Left cardiac atrium (tissue), 4 donors: ENCODE measurements at regions of chr11 and their contacts with region 1.

Region 1: DNA sequence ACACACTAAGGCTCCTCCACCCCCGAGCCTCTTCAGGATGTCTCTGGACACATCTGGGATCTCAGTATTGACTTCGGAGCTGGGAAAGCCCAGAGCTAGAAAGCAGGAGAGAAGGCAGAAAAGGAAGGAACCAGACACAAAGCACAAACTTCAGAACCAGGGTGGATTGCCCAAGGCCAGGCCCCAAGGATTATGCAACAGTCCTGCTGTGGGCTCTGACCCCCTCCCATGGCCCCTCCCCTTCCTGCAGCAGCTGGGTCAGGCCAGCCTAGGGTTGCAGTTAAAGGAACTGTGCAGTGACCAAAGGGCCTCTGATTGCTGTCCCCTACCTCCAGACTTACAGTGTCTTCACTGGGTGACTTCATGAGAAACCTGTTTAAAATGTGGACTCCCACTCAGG is 5.3 kb downstream of the KCNE3 start:
- DNase-seq: peak; percentile 83
- ATAC-seq: peak; percentile 93 to 94

Region 2: GRCh38 chr11:74570266-74571061 is 108.5 kb after region 1 on chr11:
- intact Hi-C with region 1: loop called in 1 of 2 experiments (anchors 5 kb)
- DNase-seq: peak; percentile 40
- ATAC-seq: peak; percentile 68 to 76